Aorta (tissue), 5 donors: ENCODE measurements at regions of chr1 and their contacts with region 1.

Region 1: GRCh38 chr1:170765712-170766330 is 101.9 kb downstream of the PRRX1 start:
- DNase-seq: no peak
- ATAC-seq: no peak
- H3K4me3 ChIP-seq: no peak overlapping the region
- H3K27ac ChIP-seq: no peak overlapping the region
- H3K4me1 ChIP-seq: no peaks in the 10 kb centered on the region
- H3K27me3 ChIP-seq: no peaks in the 10 kb centered on the region

Region 2: GRCh38 chr1:169928438-169929209 is 837.2 kb before region 1 on chr1:
- intact Hi-C with region 1: loop called in 1 of 2 experiments (anchors 10 kb)
- DNase-seq: no peak
- ATAC-seq: peak; percentile 78
- H3K4me3 ChIP-seq: no peak overlapping the region
- H3K27ac ChIP-seq: no peak overlapping the region
- H3K4me1 ChIP-seq: no peaks in the 10 kb centered on the region
- H3K27me3 ChIP-seq: no peaks in the 10 kb centered on the region

Region 3: DNA sequence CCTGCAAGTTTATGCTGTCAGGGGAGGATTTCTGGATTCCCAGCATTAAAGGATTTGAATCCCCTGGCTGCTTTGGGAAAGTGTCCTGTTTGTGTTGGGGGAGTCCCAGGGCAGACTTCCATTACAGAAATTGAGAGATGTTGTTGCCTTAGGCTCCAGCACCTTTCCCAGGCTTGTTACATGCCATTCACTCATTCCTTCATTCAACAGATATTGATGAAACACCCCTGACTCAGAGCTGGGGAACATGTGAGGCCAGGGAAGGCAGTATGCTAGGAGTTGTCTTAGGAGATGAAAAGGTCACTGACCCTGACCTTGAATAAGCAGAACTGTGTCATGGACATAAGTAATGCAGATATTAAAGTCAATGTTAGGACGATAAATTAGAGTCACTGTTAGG is 458.4 kb before region 1 on chr1:
- intact Hi-C with region 1: no loop called
- DNase-seq: no peak
- ATAC-seq: no peak
- H3K4me3 ChIP-seq: no peak overlapping the region
- H3K27ac ChIP-seq: peak overlapping the region in 1 of 2 donors; percentile 54
- H3K4me1 ChIP-seq: peaks cover 0 to 10% of the 10 kb centered on the region in 2 donors
- H3K27me3 ChIP-seq: no peaks in the 10 kb centered on the region

Region 4: DNA sequence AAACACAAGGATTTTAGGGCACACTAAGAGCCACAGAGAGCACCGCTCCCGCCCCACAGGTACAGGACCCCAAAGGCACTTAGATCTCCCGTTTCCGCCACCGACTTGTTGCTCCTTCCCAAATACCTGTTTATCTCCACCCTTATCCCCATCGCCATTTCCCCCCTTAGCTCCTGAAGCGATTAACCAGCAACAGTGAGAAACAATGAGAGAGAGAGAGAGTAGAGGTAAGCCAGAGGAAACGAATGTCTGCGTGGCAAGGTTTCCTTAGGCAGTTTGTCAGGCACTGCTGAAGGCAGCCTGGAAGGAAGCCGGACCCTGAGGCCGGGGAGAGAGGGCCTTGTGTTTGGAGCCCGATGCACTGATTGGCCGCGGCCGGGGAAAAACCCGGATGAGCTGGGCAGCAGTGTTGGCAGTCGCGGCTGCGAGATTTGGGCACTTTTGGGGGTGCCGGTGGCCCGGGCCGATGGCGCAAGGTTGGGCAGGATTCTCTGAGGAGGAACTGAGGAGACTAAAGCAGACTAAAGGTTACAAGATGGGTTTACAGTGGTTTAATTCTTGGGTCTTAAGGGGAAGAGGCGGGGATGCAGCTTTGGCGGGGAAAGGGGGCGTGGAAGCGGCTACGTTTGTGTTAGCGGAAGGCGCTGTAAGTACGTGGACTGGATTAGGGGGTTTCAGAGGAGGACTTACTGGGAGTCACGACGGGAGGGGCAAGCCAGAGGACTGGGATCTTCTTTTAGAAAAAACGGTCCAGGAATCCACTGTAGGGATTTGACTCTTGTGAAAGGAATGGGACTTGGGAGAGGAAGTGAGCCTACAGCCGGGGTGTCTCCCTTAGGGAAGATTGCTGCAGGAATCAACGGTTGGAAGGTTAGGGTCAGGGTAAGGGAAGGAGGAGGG is 233.8 kb before region 1 on chr1 and contains the start of gene GORAB:
- intact Hi-C with region 1: loop called in 1 of 2 experiments (anchors 10 kb)
- DNase-seq: peak; percentile 96 to 97
- ATAC-seq: peak; percentile 97
- H3K4me3 ChIP-seq: peak within 1 kb of the TSS; percentile 78 to 87
- H3K27ac ChIP-seq: peak within 1 kb of the TSS; percentile 83 to 97
- H3K4me1 ChIP-seq: peaks cover 0 to 5% of the 10 kb centered on the region in 2 donors
- H3K27me3 ChIP-seq: no peaks in the 10 kb centered on the region
- total RNA-seq, gene GORAB: 16.1 to 18.4 TPM

Region 5: GRCh38 chr1:170670802-170671628 is 94.8 kb before region 1 on chr1:
- intact Hi-C with region 1: loop called (anchors 5 kb)
- DNase-seq: peak in 1 of 2 donors; percentile 94
- ATAC-seq: peak; percentile 66
- H3K4me3 ChIP-seq: no peak overlapping the region
- H3K27ac ChIP-seq: no peak overlapping the region
- H3K4me1 ChIP-seq: no peaks in the 10 kb centered on the region
- H3K27me3 ChIP-seq: no peaks in the 10 kb centered on the region

Region 6: DNA sequence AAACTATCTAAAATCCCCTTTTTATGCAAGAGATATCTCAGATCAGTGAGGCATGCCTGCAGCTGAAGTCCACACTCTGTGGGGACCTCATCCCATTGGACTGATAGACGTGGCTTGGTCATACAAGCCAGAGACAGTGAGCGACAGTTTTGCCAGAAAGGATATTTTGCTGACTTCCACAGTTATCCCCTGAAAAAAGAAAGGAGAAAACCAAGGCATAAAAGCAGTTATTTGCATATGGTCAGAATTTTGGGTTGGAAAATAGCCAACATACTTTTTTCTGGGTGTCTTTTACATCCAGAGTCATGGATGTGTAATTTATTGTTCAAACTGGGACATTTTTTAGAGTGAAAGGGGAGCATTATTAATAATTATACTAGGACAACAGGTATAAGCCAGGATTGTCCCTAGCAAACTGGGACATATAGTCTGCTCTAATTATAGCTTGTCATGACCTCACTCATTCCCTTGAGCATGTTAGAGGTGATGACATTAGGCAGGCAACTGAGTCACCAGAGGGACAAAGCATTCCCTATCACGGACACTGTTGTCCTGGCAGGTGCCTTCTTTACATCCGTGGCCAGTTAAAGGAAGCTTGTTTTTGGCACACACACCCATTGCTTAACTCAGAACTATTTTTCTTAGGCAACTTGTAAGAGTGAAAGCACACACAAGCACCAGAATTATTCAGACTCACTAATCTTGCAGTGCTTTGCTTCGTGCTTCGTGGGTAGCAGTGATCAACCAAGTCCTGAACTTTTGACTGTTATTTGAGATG is 36.4 kb before region 1 on chr1:
- intact Hi-C with region 1: loop called in 1 of 2 experiments (anchors 2 kb)
- DNase-seq: no peak
- ATAC-seq: peak; percentile 59
- H3K4me3 ChIP-seq: no peak overlapping the region
- H3K27ac ChIP-seq: no peak overlapping the region
- H3K4me1 ChIP-seq: peaks cover 1 to 7% of the 10 kb centered on the region in 2 donors
- H3K27me3 ChIP-seq: no peaks in the 10 kb centered on the region

Region 7: GRCh38 chr1:170836141-170836540 is 70.3 kb after region 1 on chr1:
- intact Hi-C with region 1: no loop called
- DNase-seq: no peak
- ATAC-seq: no peak
- H3K4me3 ChIP-seq: no peak overlapping the region
- H3K27ac ChIP-seq: no peak overlapping the region
- H3K4me1 ChIP-seq: no peaks in the 10 kb centered on the region
- H3K27me3 ChIP-seq: no peaks in the 10 kb centered on the region